ENCODE measurements at regions of chr19 and their contacts with region 1.

Region 1: GRCh38 chr19:49937750-49938381 is 8.6 kb upstream of the NUP62 start:
- DNase-seq: peak; percentile 53 to 87 (median 72)
- ATAC-seq: peak; percentile 73
- H3K4me3 ChIP-seq: peak overlapping the region; percentile 20
- H3K4me3 Mint-ChIP-seq: no peak overlapping the region
- H3K27ac ChIP-seq: no peak overlapping the region
- H3K27ac Mint-ChIP-seq: no peak overlapping the region
- H3K4me1 ChIP-seq: peaks cover 19% of the 10 kb centered on the region
- H3K4me1 Mint-ChIP-seq: peaks cover 18% of the 10 kb centered on the region
- H3K27me3 ChIP-seq: no peaks in the 10 kb centered on the region
- H3K27me3 Mint-ChIP-seq: no peaks in the 10 kb centered on the region
- CTCF ChIP-seq: peak; percentile 98

Region 2: DNA sequence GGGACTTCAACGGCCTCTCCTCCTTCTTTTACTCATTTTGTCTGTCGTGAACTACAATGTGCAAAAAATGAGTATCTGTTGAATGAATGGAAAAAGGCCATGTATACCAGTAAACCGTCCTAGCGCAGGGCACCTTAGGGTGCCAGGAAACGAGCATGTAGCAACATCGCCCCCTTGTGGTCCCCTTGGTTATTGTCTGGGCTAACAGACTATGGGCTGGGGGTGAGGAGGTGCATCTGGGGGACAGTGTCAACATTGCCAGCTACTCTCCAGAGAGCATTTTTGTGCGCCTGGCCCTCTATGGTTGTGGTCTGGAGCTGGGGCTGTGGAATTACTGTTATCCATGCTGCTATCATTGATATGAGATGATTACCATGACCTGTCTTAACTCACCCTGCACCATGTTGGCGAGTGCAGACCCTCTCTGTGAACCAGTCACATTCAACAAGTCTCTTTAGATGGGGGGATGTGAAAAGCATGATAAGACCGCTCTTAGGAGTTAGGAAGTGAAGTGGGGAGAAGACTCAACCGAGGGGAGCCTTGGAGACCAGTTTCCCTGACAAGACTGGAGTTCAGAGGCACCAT is 45.9 kb after region 1 on chr19:
- CTCF ChIA-PET with region 1: interaction called, 10 read pairs
- POLR2A ChIA-PET with region 1: no interaction called
- intact Hi-C with region 1: loop called (anchors 1 kb)
- DNase-seq: peak; percentile 67 to 87 (median 76)
- ATAC-seq: peak; percentile 74
- H3K4me3 ChIP-seq: no peak overlapping the region
- H3K4me3 Mint-ChIP-seq: no peak overlapping the region
- H3K27ac ChIP-seq: no peak overlapping the region
- H3K27ac Mint-ChIP-seq: no peak overlapping the region
- H3K4me1 ChIP-seq: no peaks in the 10 kb centered on the region
- H3K4me1 Mint-ChIP-seq: no peaks in the 10 kb centered on the region
- H3K27me3 ChIP-seq: no peaks in the 10 kb centered on the region
- H3K27me3 Mint-ChIP-seq: no peaks in the 10 kb centered on the region
- CTCF ChIP-seq: peak; percentile 86